Posterior vena cava (tissue), 2 donors: ENCODE measurements at regions of chr11 and their contacts with region 1.

Region 1: GRCh38 chr11:131867457-131868257 is 497.2 kb downstream of the NTM start:
- DNase-seq: peak; percentile 89

Region 2: DNA sequence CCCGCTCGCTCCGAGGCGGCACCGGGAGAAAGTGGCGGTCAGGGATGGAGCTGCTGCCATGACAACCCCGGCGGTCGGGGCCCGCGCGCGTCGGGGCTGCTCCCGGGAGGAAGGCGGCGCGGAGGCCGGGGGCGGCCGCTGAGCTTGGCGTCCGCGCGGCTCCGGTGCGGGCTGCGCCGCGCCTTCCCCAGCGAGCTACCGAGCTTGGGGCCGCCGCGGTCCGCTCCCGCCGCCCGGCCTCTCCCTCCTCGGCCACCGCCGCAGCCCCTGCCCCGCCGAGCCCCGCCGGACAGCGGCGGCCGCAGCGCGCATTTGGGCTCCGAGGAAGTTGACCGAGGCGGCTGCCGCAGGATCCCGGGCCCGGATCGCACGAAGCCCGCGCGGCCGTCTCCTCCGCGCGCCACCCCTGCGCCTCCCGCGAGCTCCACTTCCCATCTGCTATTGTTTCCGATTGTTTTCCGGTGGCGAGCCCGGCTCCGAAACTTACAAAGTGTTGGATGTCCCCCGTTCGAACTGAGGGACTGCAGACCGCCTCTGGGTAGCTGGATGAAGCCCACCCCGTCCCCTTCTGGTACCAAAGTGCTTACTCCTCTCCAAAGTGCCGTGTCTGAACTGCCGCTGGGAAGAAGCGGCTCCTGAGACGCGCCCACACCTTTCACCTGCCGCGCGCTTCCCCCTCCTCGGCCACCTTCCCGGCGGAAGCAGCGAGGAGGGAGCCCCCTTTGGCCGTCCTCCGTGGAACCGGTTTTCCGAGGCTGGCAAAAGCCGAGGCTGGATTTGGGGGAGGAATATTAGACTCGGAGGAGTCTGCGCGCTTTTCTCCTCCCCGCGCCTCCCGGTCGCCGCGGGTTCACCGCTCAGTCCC is 43.1 kb after region 1 on chr11:
- intact Hi-C with region 1: loop called in 1 of 2 experiments (anchors 5 kb)
- DNase-seq: no peak

Region 3: GRCh38 chr11:132028380-132029240 is 161.0 kb after region 1 on chr11:
- intact Hi-C with region 1: loop called in 1 of 2 experiments (anchors 10 kb)
- DNase-seq: no peak

Region 4: DNA sequence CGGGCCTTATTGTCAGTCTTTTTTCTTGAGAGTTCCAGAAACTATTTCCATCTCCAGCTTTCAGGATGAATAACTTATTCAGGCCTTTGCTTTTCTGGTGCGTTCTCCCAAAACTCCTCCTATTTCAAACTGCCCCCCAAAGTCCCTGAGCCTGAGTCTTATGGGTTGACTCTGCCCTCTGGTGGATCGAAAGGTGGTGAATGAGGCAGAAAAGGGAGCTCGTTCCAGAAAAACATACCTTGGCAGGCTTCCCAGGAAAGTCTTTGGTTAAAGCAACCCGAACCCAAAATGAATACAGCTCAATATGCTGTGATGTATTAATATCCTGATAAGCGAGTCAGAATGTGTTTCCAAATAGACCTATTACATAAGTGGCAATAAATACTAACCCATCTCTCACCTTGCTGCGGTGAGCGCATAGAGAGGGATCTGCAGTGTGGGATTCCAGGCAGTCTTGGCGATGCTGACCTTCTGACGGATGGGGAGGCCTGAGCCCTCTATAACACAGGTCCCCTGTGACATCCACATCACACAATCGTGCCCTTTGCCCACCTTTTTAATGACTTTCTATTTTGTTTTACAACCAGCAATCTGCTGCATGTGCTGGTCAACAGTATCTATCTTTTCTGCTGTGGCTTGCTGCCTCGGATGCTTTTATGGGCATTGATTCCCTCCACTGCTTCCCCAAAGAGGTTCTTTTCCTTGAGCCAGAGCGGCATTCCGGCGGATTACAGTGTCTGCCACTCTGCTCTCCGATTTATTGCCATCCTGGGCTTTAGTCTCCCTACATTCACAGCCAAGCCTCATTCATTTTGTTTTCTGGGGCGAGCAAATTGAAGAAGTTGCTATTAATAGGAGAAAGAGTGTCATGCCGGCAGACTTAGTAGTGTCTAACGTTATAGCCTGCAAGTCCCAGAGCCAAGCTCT is 259.6 kb after region 1 on chr11:
- intact Hi-C with region 1: loop called in 1 of 2 experiments (anchors 5 kb)
- DNase-seq: no peak

Region 5: GRCh38 chr11:132140056-132140455 is 272.4 kb after region 1 on chr11:
- intact Hi-C with region 1: loop called in 1 of 2 experiments (anchors 10 kb)
- DNase-seq: no peak

Region 6: DNA sequence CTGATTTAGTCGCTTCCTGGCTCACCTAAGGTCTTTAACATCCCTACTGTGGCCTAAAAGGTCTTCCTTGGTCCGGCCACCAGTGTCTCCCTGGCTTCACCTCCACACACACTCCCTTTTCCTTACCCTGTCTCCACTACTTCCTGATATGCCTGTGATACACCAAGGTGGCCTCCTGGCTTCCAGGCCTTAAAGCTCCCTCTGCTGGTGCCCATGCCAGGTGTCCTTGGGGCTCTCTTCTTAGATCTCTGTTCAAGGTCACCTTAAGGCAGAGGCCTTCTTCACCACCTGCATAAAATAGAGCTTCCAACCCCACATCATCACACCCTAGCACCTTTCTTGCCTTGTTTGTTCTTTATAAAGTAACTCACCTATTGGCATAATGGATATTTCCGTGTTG is 290.4 kb after region 1 on chr11:
- intact Hi-C with region 1: no loop called
- DNase-seq: no peak